Heart left ventricle (tissue), 16 donors: ENCODE measurements at regions of chr19 and their contacts with region 1.

Region 1: DNA sequence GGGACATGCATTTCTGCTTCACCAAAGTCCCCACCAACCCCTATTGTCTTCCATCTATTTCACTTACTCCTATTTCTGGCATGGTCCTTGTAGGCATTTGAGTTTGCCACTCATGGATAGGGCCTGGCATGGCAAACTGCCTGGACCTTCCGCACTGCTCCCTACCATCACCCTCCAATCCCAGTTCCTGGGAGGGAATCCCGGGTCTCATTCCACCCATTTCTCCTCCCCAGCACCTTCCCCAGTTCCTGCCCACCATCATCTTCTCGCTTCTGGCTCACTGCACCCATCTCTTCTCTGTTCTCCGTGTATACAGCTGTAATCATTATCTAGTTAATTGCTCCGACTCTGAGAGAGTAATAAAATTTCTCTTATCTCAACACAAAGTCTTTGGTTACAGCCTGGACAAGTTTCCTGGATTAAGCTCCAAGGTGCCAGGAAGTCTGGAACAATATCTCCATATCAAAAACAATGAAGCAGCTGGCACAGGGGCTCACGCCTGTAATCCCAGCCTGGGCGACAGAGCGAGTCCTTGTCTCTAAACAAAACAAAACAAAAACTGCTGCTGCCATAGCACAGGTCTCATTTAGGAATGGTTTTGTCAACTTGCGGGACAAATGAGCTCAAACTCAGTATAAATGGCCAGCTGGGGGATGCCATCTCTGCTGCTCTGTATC is 17.0 kb upstream of the COX7A1 start:
- DNase-seq: peak in 3 of 5 donors; percentile 32 to 69 (median 44)
- ATAC-seq: peak; percentile 40 to 76 (median 60)
- H3K4me3 ChIP-seq: no peak overlapping the region
- H3K27ac ChIP-seq: peak overlapping the region; percentile 19 to 85 (median 68)
- H3K4me1 ChIP-seq: peaks cover 0 to 21% (median 14%) of the 10 kb centered on the region in 12 donors
- H3K27me3 ChIP-seq: no peaks in the 10 kb centered on the region
- CTCF ChIP-seq: no peak
- POLR2A ChIP-seq: no peak

Region 2: DNA sequence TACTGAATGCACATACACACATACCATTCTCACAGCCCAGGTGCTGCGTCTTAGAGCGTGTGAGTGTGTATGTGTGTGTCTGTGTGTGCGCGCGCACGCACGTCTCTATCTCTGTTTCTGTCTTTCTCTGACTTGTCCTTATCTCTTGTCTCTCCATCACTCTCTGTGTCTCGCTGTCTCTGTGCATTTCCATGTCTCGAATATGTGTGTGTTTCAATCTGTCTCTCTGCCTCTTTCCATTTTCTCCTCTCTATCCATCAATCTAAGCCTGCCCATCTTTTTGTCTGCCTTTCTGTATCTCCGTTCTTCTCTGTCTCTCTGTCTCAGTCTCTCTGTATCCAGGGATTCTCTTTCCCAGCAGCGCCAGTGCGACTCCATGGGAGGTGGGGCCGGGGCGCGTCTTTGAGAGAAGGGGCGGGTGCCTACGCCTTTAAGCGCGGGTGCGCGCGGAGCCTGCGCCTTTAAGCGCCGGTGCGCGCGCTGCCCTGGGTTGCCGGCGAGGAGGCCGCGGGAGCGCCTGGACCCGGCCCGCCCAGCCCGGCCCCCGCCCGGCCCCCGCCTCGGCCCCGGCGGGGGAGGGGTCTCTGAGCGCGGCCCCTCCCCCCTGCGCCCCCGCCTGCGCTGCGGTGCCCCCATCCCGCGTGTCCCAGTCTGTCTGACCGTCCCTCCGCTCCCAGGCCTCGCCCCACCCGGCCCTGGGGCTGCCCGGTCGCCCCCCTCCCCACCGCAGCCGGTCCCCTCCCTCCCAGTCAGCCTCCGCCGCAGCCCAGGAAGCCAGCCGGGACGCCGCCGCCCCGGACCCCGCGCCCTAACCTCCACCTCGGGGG is 233.1 kb before region 1 on chr19 and contains the start of gene LRFN3:
- intact Hi-C with region 1: no loop called
- DNase-seq: peak; percentile 68 to 86 (median 77)
- ATAC-seq: peak in 3 of 4 donors; percentile 41 to 59 (median 54)
- H3K4me3 ChIP-seq: peak within 1 kb of the TSS; percentile 35 to 82 (median 68)
- H3K27ac ChIP-seq: peak within 1 kb of the TSS in 11 of 12 donors; percentile 49 to 90 (median 69)
- H3K4me1 ChIP-seq: peaks cover 0 to 33% (median 21%) of the 10 kb centered on the region in 12 donors
- H3K27me3 ChIP-seq: peaks cover 0 to 2% (median 0%) of the 10 kb centered on the region in 9 donors
- CTCF ChIP-seq: no peak
- POLR2A ChIP-seq: no peak
- total RNA-seq, gene LRFN3: 4.5 to 18.6 (median 8.5) TPM

Region 3: DNA sequence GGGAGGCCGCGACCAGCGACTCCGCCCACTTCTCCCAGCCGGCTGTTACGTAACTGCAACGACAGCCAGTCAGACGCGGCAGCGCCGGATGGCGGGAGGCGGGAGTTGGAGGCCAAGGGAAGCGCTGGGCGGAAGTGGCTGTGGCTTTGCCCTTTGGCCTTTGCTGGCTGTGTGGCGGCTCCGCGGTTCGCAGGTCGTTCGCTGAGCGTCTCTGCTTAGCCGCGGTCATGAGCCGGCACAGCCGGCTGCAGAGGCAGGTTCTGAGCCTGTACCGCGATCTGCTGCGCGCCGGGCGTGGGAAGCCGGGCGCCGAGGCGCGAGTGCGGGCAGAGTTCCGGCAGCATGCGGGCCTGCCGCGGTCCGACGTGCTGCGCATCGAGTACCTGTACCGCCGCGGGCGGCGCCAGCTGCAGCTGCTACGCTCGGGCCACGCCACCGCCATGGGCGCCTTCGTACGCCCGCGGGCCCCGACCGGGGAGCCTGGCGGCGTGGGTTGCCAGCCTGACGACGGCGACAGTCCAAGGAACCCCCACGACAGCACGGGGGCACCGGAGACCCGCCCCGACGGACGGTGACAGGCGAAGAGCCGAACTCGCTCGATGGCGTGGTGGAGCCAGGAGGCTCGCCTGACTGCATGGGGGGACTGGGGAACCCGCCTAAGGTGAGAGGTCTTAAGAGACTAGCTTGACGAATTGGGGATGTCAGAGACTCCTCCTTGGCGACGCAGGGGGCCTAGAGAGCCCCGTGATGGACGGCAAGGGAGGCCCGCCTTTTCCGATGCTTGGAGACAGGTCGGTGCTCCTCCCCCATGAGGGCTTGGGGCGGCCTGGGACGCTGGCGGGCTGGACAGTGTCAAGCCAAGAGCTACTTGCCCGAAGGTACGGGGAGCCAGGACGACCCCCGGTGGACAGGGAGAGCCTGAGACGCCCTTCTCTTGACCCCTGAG is 173.9 kb before region 1 on chr19 and contains the start of gene SDHAF1:
- intact Hi-C with region 1: loop called in 1 of 10 experiments (anchors 5 kb)
- DNase-seq: peak; percentile 97 to 98 (median 98)
- ATAC-seq: peak; percentile 95 to 98 (median 96)
- H3K4me3 ChIP-seq: peak within 1 kb of the TSS; percentile 67 to 99 (median 90)
- H3K27ac ChIP-seq: peak within 1 kb of the TSS in 11 of 12 donors; percentile 68 to 88 (median 83)
- H3K4me1 ChIP-seq: peaks cover 4 to 43% (median 25%) of the 10 kb centered on the region in 12 donors
- H3K27me3 ChIP-seq: no peaks in the 10 kb centered on the region
- CTCF ChIP-seq: peak in 1 of 12 donors; percentile 11
- POLR2A ChIP-seq: peak in 1 of 2 donors; percentile 49
- total RNA-seq, gene SDHAF1: 9.7 to 41.8 (median 11.4) TPM

Region 4: DNA sequence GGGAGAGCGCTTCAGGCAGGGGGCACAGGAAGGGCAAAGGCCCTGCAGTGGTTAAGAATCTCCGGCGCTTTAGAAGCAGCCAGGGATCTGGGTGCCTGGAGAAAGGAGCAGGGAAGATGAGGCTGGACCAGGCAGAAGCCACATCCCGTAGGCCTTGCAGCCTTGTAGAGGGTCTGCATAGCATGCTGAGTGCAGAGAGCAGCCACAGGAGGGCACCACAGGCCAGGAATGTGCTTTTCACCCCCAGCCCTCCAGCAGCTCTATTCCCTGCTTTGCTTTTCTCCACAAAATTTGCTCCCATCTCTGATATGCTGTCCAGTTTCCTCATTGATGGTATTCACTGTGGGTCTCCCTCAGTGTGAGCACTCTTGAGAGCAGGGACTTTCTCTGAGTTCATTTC is 108.8 kb before region 1 on chr19:
- intact Hi-C with region 1: loop called (anchors 2 to 10 kb)
- DNase-seq: peak; percentile 24 to 70 (median 54)
- ATAC-seq: peak; percentile 70 to 88 (median 86)
- H3K4me3 ChIP-seq: no peak overlapping the region
- H3K27ac ChIP-seq: no peak overlapping the region
- H3K4me1 ChIP-seq: peaks cover 0 to 6% (median 2%) of the 10 kb centered on the region in 12 donors
- H3K27me3 ChIP-seq: no peaks in the 10 kb centered on the region
- CTCF ChIP-seq: peak; percentile 33 to 66 (median 54)
- POLR2A ChIP-seq: no peak

Region 5: DNA sequence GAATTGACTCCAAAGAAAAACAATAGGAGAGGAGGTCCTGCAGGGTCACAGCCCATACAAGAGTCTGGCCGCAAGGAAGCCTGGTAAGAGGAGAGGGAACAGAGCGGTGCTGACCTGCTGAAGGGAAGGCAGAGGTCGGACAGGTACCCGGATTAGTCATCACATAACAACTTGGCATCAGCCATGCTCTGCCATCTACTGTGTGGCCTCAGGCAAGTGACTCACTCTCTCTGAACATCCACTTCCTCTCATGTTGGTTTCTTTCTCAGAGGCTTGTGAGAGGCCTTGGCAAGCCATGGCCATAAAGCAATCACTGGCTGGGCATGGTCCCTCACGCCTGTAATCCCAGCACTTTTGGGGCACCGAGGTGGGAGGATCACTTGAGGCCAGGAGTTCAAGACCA is 36.7 kb before region 1 on chr19:
- intact Hi-C with region 1: loop called in 9 of 10 experiments (anchors 1 to 2 kb)
- DNase-seq: no peak
- ATAC-seq: no peak
- H3K4me3 ChIP-seq: no peak overlapping the region
- H3K27ac ChIP-seq: peak overlapping the region in 1 of 12 donors; percentile 61
- H3K4me1 ChIP-seq: peaks cover 0 to 54% (median 11%) of the 10 kb centered on the region in 12 donors
- H3K27me3 ChIP-seq: no peaks in the 10 kb centered on the region
- CTCF ChIP-seq: no peak
- POLR2A ChIP-seq: no peak

Region 6: DNA sequence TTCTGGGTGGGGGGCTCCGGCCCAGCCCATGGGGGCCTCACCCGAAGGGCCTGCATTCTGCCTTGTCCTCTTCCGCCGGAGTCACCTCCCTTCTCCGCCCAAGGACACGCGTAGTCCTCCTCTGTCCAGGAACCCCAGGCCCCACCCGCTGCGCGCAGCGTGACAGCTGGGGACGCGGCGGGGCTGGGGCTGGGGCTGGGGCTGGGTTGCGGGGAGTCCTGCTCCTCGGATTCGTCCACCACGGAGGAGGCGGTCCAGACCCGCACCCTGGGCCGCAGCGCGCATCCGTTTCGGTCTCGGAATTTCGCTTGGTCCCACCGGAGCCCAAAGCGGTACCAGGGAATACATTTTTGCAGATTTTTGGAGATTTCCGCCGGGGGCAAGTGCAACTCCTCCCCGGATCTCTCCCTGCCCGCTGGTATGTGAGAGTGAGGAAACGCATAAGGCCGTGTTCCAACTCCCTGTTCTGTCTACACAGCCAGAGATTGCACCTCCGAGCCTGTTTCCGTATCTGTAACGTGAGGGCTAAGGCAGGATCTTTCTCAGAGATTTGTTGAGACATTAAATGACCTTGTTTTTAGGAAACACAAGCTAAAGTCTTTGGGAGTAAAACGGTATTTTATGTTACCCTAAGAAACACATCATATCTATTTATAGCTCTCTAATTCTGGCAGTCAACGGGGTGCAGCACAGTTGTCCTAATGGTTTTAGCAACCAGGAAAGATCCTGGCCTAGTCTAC is 16.7 kb before region 1 on chr19 and contains the start of gene COX7A1:
- intact Hi-C with region 1: loop called in 1 of 10 experiments (anchors 1 kb)
- DNase-seq: peak; percentile 88 to 93 (median 90)
- ATAC-seq: peak; percentile 91 to 93 (median 92)
- H3K4me3 ChIP-seq: peak within 1 kb of the TSS; percentile 57 to 94 (median 79)
- H3K27ac ChIP-seq: peak within 1 kb of the TSS; percentile 97 to 100 (median 99)
- H3K4me1 ChIP-seq: peaks cover 0 to 45% (median 25%) of the 10 kb centered on the region in 12 donors
- H3K27me3 ChIP-seq: no peaks in the 10 kb centered on the region
- CTCF ChIP-seq: no peak
- POLR2A ChIP-seq: peak; percentile 78 to 80
- total RNA-seq, gene COX7A1: 414 to 2,982 (median 2,187) TPM